ENCODE measurements at regions of chr22 and their contacts with region 1.

Region 1: DNA sequence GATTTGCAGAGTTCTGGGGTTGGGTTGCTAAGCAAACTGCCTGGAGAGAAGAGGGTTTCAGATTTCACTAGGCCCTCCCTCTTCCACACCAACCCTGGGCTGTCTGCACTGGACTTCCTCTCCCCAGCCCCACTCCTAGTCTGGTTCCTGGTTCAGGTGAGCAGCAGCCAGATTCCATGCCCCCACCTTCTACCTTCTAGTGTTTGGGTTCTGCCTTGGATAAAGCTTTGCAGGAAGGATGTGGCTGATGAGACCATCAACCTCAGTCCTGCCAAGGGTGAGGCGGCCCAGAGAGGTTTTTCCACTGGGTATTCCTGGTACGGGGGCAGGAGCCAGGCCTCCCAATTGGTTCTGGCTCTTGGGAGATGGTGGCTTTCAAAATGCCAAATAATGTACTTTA is 68.3 kb downstream of the BCR start:
- DNase-seq: peak; percentile 61 to 83 (median 70)
- ATAC-seq: peak; percentile 44
- H3K4me3 ChIP-seq: no peak overlapping the region
- H3K27ac ChIP-seq: no peak overlapping the region
- H3K4me1 ChIP-seq: peaks cover 39 to 56% of the 10 kb centered on the region in 2 experiments
- H3K27me3 ChIP-seq: no peaks in the 10 kb centered on the region
- CTCF ChIP-seq: no peak
- EP300 ChIP-seq: no peak
- POLR2A ChIP-seq: no peak
- RAD21 ChIP-seq: no peak

Region 2: GRCh38 chr22:22520020-22520656 is 728.4 kb before region 1 on chr22 and contains the start of gene ZNF280A:
- CTCF ChIA-PET with region 1: no interaction called
- POLR2A ChIA-PET with region 1: no interaction called
- in situ Hi-C with region 1: no loop called
- intact Hi-C with region 1: no loop called
- DNase-seq: peak; percentile 98 to 99 (median 98)
- ATAC-seq: peak; percentile 82
- H3K4me3 ChIP-seq: peak within 1 kb of the TSS; percentile 41
- H3K27ac ChIP-seq: peak within 1 kb of the TSS; percentile 61
- H3K4me1 ChIP-seq: peaks cover 27 to 30% of the 10 kb centered on the region in 2 experiments
- H3K27me3 ChIP-seq: no peaks in the 10 kb centered on the region
- CTCF ChIP-seq: no peak
- EP300 ChIP-seq: no peak
- POLR2A ChIP-seq: no peak
- RAD21 ChIP-seq: no peak
- polyA plus RNA-seq, gene ZNF280A: 28.6 to 38.6 TPM

Region 3: DNA sequence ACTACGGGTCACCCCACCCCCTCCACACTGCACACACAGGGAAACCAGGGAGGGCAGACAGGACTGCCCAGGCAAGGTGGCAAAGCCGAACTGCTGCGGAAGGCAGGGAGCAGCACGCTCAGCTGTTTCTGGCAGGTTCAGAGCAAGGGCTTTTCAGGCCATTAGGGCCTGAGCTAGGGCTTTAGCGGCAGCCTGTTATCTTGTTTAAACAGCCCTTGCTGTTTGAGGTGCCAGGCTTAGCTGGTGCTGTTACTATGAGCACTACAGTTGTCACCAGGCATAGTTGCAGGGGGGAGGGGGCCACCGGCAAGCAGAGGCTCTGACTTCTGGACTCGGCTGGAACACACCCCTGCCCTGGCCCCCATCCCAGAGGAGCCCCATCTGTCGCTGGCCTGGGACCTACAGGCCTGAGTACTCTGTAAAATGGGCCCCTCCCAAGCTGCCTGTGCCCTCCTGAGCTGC is 141.6 kb before region 1 on chr22:
- CTCF ChIA-PET with region 1: no interaction called
- POLR2A ChIA-PET with region 1: no interaction called
- in situ Hi-C with region 1: no loop called
- intact Hi-C with region 1: no loop called
- DNase-seq: peak; percentile 59 to 66 (median 64)
- ATAC-seq: peak; percentile 1
- H3K4me3 ChIP-seq: no peak overlapping the region
- H3K27ac ChIP-seq: no peak overlapping the region
- H3K4me1 ChIP-seq: peaks cover 0 to 33% of the 10 kb centered on the region in 2 experiments; a peak in 2 of 5 replicates
- H3K27me3 ChIP-seq: peaks cover 63 to 100% of the 10 kb centered on the region in 2 experiments
- CTCF ChIP-seq: 0 out of 6 replicates have a peak, but pooled peaks of 1 of the 3 experiments have one; percentile 16
- EP300 ChIP-seq: no peak; the same call in 1 of the 2 replicates
- POLR2A ChIP-seq: no peak
- RAD21 ChIP-seq: no peak

Region 4: GRCh38 chr22:23219822-23220484 is 28.6 kb before region 1 on chr22:
- CTCF ChIA-PET with region 1: no interaction called
- POLR2A ChIA-PET with region 1: interaction called, 351 read pairs
- in situ Hi-C with region 1: no loop called
- intact Hi-C with region 1: loop called (anchors 1 kb)
- DNase-seq: peak in 2 of 4 experiments; percentile 90 to 94
- ATAC-seq: peak; percentile 54
- H3K4me3 ChIP-seq: no peak overlapping the region
- H3K27ac ChIP-seq: peak overlapping the region; percentile 6; the same call in 2 of the 3 replicates
- H3K4me1 ChIP-seq: peaks cover 77 to 78% of the 10 kb centered on the region in 2 experiments
- H3K27me3 ChIP-seq: no peaks in the 10 kb centered on the region
- CTCF ChIP-seq: no peak
- EP300 ChIP-seq: no peak
- POLR2A ChIP-seq: no peak
- RAD21 ChIP-seq: no peak

Region 5: DNA sequence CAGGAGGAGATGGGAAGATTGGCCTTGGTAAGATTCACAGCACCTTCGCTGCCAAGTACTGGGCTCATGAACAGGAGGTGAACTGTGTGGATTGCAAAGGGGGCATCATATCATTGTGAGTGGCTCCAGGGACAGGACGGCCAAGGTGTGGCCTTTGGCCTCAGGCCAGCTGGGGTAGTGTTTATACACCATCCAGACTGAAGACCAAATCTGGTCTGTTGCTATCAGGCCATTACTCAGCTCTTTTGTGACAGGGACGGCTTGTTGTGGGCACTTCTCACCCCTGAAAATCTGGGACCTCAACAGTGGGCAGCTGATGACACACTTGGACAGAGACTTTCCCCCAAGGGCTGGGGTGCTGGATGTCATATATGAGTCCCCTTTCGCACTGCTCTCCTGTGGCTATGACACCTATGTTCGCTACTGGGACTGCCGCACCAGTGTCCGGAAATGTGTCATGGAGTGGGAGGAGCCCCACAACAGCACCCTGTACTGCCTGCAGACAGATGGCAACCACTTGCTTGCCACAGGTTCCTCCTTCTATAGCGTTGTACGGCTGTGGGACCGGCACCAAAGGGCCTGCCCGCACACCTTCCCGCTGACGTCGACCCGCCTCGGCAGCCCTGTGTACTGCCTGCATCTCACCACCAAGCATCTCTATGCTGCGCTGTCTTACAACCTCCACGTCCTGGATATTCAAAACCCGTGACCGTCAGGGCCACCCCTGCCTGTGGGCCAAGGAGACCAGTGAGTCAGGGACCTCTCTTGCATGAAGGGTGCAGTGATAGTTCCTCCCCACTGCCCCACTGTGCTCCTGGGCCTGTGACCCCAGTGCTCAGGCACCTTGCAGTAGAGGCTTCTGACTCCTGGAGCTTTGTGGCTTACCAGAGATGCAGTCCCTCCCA is 15.3 kb after region 1 on chr22:
- CTCF ChIA-PET with region 1: interaction called, 3 read pairs
- POLR2A ChIA-PET with region 1: interaction called, 193 read pairs
- in situ Hi-C with region 1: no loop called
- intact Hi-C with region 1: no loop called
- DNase-seq: peak in 2 of 4 experiments; percentile 58 to 60
- ATAC-seq: peak; percentile 7
- H3K4me3 ChIP-seq: no peak overlapping the region
- H3K27ac ChIP-seq: no peak overlapping the region
- H3K4me1 ChIP-seq: peaks cover 0 to 35% of the 10 kb centered on the region in 2 experiments; a peak in 1 of 5 replicates
- H3K27me3 ChIP-seq: no peaks in the 10 kb centered on the region
- CTCF ChIP-seq: no peak; a peak in 1 of 6 replicates
- EP300 ChIP-seq: no peak
- POLR2A ChIP-seq: no peak
- RAD21 ChIP-seq: no peak

Region 6: GRCh38 chr22:23414727-23415431 is 166.3 kb after region 1 on chr22:
- CTCF ChIA-PET with region 1: no interaction called
- POLR2A ChIA-PET with region 1: no interaction called
- in situ Hi-C with region 1: no loop called
- intact Hi-C with region 1: no loop called
- DNase-seq: no peak
- ATAC-seq: no peak
- H3K4me3 ChIP-seq: no peak overlapping the region
- H3K27ac ChIP-seq: no peak overlapping the region
- H3K4me1 ChIP-seq: peaks cover 0 to 9% of the 10 kb centered on the region in 2 experiments; a peak in 2 of 5 replicates
- H3K27me3 ChIP-seq: peaks cover 0 to 23% of the 10 kb centered on the region in 2 experiments; a peak in 4 of 5 replicates
- CTCF ChIP-seq: no peak
- EP300 ChIP-seq: no peak
- POLR2A ChIP-seq: no peak
- RAD21 ChIP-seq: no peak